Activated CD4-positive, alpha-beta T cell treated with anti-CD3 and anti-CD28 coated beads, Interleukin-2, amount 10 ng/mL, durations not matched to agents 24 days and 14 days (primary cell): ENCODE measurements at regions of chr5 and their contacts with region 1.

Region 1: DNA sequence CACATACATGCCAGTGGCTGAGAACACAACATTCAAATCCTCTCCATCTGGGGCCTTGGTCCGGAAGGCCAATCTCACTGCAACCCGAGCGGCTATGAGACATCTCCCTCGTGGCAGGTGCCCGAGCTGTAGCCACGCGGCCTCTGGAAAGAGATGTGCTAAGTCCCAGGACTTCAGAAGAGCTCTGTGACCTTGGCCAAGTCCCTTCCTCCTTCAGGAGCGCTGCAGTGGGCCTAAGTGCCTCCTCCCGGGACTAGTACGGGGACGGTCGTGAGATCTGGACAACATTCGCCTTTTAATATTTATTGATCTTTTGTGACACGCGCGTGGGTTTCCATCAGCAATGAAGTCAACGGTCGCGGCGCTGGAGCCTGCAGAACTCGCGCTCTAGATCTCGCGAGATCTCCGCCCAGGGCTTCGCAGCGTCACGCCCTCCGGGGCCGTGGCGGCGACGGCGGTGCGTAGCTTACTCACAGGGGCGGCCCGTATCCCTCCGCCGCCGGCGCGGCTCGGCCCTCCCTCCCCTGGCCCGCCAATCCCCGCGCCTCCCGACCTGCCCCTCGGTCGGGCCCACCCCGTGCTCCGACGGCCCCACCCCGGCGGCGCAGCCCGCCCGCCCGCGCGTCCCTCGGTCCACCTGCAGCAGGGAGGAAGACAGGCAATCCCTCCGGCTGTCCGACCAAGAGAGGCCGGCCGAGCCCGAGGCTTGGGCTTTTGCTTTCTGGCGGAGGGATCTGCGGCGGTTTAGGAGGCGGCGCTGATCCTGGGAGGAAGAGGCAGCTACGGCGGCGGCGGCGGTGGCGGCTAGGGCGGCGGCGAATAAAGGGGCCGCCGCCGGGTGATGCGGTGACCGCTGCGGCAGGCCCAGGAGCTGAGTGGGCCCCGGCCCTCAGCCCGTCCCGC is at the start of gene UBE2D2:
- DNase-seq: peak; percentile 99
- H3K4me3 Mint-ChIP-seq: peak within 1 kb of the TSS; percentile 98
- H3K27ac Mint-ChIP-seq: peak within 1 kb of the TSS; percentile 94
- H3K4me1 Mint-ChIP-seq: peaks cover 33% of the 10 kb centered on the region
- H3K27me3 Mint-ChIP-seq: no peaks in the 10 kb centered on the region
- total RNA-seq, gene UBE2D2: 272 and 275 TPM in 2 replicates

Region 2: DNA sequence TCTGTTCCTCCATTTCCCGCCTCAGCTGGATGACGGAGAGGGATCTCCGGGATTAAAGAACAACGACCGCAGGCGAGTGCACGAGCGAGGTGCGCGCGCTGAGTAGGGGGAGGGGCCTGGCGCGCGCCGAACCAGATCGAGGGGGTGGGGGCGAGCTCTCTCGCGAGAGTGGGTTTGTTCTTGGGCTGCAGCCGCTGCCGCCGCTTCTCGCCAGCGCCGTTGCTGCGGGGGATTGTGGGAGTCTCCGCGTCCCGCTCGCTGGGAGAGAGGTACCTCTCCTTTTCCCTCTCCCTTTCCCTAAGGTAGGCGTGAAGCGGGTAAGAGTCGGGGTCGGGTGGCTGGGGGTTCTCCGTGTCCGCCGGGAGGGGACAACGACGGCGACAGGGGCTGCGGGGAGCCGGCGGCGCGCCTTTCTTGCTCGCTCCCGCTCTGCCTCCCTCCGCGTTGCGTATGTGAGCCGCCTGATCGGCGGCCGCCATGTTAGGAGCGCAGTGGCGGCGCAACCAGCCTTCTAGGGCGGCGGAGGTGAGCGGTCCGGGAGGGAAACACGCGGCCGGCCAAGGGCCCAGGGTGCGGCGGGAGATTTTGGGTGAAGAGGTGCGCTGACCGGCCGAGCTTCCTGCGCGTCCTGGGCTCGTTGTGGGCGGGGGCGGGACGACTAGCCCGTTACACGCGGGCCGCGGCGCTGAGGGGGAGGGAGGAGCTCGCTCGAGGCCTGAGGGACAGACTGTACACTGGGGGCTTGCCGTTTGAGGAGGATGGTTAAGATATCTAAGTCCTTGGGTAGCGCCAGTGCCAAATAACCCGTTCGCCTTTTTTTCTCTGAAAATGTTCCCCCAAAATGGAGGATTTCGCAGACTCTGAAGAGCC is 267.3 kb before region 1 on chr5 and contains the start of gene MATR3:
- intact Hi-C with region 1: loop called (anchors 1 kb)
- DNase-seq: peak; percentile 97
- H3K4me3 Mint-ChIP-seq: peak within 1 kb of the TSS; percentile 96
- H3K27ac Mint-ChIP-seq: peak within 1 kb of the TSS; percentile 97
- H3K4me1 Mint-ChIP-seq: peaks cover 38% of the 10 kb centered on the region
- H3K27me3 Mint-ChIP-seq: no peaks in the 10 kb centered on the region
- total RNA-seq, gene MATR3: 243 and 258 TPM in 2 replicates

Region 3: DNA sequence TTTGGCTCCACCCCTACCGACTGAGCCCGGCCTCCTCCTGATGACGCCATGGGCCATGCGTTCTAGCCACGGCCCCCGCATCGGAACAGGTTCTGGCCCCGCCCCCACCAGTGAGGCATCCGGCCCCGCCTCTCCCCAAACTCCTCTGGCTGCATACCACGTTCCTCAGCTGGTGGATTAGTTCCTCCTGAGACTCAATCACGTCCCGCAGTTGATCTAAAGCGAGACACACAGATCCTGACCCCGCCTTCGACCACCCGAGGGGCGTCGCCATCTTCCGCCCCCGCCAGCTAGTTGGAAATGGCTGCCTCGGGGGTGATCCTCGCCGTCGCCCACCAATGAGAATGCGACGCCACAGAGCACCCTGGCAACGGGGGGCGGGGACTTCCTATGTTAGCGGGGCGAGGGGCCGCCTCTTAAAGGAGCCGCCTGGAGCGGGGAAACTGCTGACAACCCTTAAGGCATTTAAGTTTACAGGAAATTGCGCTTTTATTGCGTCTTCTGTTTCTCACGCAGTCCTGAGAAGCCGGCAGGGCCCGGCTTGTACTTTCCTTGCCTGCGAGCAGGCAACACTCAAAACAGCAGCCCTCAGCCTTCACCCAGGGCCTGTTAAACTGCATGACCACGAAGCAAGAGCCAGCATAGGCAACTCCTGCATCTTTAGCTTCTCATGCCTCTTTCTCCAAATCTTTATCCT is 157.1 kb before region 1 on chr5 and contains the start of gene SPATA24:
- intact Hi-C with region 1: loop called (anchors 1 kb)
- DNase-seq: peak; percentile 99
- H3K4me3 Mint-ChIP-seq: peak within 1 kb of the TSS; percentile 87
- H3K27ac Mint-ChIP-seq: peak within 1 kb of the TSS; percentile 99
- H3K4me1 Mint-ChIP-seq: peaks cover 37% of the 10 kb centered on the region
- H3K27me3 Mint-ChIP-seq: no peaks in the 10 kb centered on the region
- total RNA-seq, gene SPATA24: 4.2 TPM in 2 replicates

Region 4: GRCh38 chr5:139439013-139439903 is 121.7 kb before region 1 on chr5 and contains the start of gene DNAJC18:
- intact Hi-C with region 1: loop called (anchors 2 kb)
- DNase-seq: peak; percentile 97
- H3K4me3 Mint-ChIP-seq: peak within 1 kb of the TSS; percentile 97
- H3K27ac Mint-ChIP-seq: peak within 1 kb of the TSS; percentile 99
- H3K4me1 Mint-ChIP-seq: peaks cover 55% of the 10 kb centered on the region
- H3K27me3 Mint-ChIP-seq: no peaks in the 10 kb centered on the region
- total RNA-seq, gene DNAJC18: 34.2 and 38.6 TPM in 2 replicates

Region 5: GRCh38 chr5:139517683-139518564 is 43.1 kb before region 1 on chr5:
- intact Hi-C with region 1: loop called (anchors 1 kb)
- DNase-seq: peak; percentile 98
- H3K4me3 Mint-ChIP-seq: peak overlapping the region; percentile 83
- H3K27ac Mint-ChIP-seq: peak overlapping the region; percentile 93
- H3K4me1 Mint-ChIP-seq: peaks cover 28% of the 10 kb centered on the region
- H3K27me3 Mint-ChIP-seq: no peaks in the 10 kb centered on the region

Region 6: DNA sequence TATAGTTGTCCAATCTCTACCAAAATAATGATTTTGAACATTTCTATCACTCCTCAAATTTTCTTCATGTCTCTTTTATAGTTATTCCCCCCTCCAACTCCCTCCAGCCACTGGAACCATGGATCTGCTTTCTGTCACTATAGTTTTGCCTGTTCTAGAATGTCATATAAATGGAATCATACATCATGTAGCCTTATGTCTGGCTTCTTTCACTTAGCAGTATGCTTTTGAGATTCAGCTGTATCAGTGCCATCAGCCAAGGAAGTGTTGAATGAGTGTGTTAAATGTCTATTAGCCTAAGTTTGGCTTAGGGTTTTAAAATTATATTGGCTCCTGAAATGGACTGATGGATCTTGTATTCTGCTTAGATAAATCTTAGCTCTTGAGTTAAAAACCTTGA is 36.1 kb after region 1 on chr5:
- intact Hi-C with region 1: loop called (anchors 5 kb)
- DNase-seq: no peak
- H3K4me3 Mint-ChIP-seq: no peak overlapping the region
- H3K27ac Mint-ChIP-seq: peak overlapping the region; percentile 15
- H3K4me1 Mint-ChIP-seq: peaks cover 19% of the 10 kb centered on the region
- H3K27me3 Mint-ChIP-seq: no peaks in the 10 kb centered on the region

Region 7: DNA sequence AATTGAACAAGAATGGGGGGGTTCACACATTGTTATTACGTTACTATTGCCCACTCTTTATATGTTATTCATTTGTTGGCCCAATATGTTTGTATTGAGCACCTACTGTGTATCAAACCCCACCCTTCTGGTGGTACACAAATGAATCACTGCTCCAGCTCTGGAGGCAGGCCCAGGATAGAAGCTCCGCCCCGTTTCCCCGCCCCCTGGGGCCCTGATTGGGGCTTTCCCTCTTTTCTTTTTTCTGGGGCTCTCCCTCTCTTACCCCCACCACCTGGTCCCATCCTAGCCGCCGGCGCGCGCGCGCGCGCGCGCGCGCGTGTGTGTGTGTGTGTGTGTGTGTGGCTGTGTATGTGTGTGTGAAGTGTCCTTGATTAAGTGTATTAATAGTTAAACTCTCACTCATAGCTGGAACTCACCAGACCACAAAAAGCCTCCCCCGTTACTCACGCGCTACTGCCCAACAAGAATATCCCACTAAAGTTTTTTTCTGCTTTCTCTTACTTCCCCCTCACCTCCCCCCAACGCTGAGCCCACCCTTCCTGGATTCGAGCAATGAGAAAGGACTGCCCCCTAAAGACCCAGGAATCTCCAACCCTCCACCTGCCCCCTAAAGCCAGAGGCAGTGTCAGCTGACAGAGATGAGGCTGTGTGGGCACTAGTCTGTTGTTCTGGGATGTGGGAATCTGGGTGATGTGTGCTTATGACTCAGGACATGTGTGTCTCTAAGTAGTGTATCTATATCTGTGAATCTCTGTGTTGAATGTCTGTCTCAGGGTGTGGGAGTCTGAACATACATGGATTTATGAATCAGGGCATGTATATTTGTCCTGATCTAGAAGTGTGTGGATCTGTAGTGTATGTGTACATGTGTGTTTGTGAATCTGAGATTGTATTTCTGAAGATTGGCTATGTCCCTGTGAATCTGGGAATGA is 91.1 kb after region 1 on chr5:
- intact Hi-C with region 1: no loop called
- DNase-seq: peak; percentile 88
- H3K4me3 Mint-ChIP-seq: no peak overlapping the region
- H3K27ac Mint-ChIP-seq: no peak overlapping the region
- H3K4me1 Mint-ChIP-seq: peaks cover 31% of the 10 kb centered on the region
- H3K27me3 Mint-ChIP-seq: peaks cover 47% of the 10 kb centered on the region

Region 8: GRCh38 chr5:139696894-139697658 is 136.1 kb after region 1 on chr5:
- intact Hi-C with region 1: no loop called
- DNase-seq: peak; percentile 73
- H3K4me3 Mint-ChIP-seq: peak overlapping the region; percentile 56
- H3K27ac Mint-ChIP-seq: no peak overlapping the region
- H3K4me1 Mint-ChIP-seq: peaks cover 8% of the 10 kb centered on the region
- H3K27me3 Mint-ChIP-seq: peaks cover 35% of the 10 kb centered on the region

Region 9: GRCh38 chr5:140401362-140402257 is 840.6 kb after region 1 on chr5 and contains the start of gene ANKHD1:
- intact Hi-C with region 1: loop called (anchors 5 kb)
- DNase-seq: peak; percentile 99
- H3K4me3 Mint-ChIP-seq: no peak within 1 kb of the TSS
- H3K27ac Mint-ChIP-seq: no peak within 1 kb of the TSS
- H3K4me1 Mint-ChIP-seq: peaks cover 27% of the 10 kb centered on the region
- H3K27me3 Mint-ChIP-seq: no peaks in the 10 kb centered on the region
- total RNA-seq, gene ANKHD1: 118 and 121 TPM in 2 replicates